Activated B cell treated with CpG ODN at 0.5 μM for 24 hours (primary cell): ENCODE measurements at regions of chr14 and their contacts with region 1.

Region 1: DNA sequence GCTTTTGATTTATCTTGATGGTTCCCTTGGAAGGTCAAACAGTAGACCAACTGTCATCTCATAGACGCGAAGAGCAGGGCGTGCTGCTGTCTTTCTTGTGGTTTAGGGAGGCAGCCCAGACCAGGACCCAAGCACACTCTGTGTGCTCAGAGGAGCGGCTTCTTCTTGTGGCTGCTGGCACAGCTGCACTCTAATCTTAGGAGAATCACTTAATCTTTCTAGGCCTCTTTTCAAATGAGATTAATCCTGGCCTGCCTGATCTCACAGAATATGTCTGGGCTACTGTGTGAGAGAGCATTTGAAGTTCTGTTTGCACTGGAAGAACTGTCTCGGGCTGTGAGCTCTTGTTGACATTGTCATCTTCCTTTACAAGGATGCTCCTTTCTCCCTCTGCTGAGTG is 60.0 kb upstream of the TRAF3 start:
- DNase-seq: no peak
- ATAC-seq: no peak
- H3K4me3 Mint-ChIP-seq: no peak overlapping the region
- H3K27ac Mint-ChIP-seq: no peak overlapping the region
- H3K4me1 Mint-ChIP-seq: no peaks in the 10 kb centered on the region
- H3K27me3 Mint-ChIP-seq: no peaks in the 10 kb centered on the region
- CTCF ChIP-seq: no peak

Region 2: GRCh38 chr14:102591889-102592763 is 125.2 kb before region 1 on chr14 and contains the start of gene RCOR1:
- CTCF ChIA-PET with region 1: no interaction called
- POLR2A ChIA-PET with region 1: no interaction called
- intact Hi-C with region 1: no loop called
- DNase-seq: peak; percentile 94
- ATAC-seq: peak; percentile 84
- H3K4me3 Mint-ChIP-seq: peak within 1 kb of the TSS; percentile 93
- H3K27ac Mint-ChIP-seq: peak within 1 kb of the TSS; percentile 97
- H3K4me1 Mint-ChIP-seq: peaks cover 26% of the 10 kb centered on the region
- H3K27me3 Mint-ChIP-seq: no peaks in the 10 kb centered on the region
- CTCF ChIP-seq: no peak
- total RNA-seq, gene RCOR1: 21.0 and 23.0 TPM in 2 replicates

Region 3: GRCh38 chr14:102831163-102831804 is 114.0 kb after region 1 on chr14:
- CTCF ChIA-PET with region 1: no interaction called
- POLR2A ChIA-PET with region 1: no interaction called
- intact Hi-C with region 1: loop called (anchors 5 kb)
- DNase-seq: no peak
- ATAC-seq: no peak
- H3K4me3 Mint-ChIP-seq: no peak overlapping the region
- H3K27ac Mint-ChIP-seq: no peak overlapping the region
- H3K4me1 Mint-ChIP-seq: peaks cover 43% of the 10 kb centered on the region
- H3K27me3 Mint-ChIP-seq: no peaks in the 10 kb centered on the region
- CTCF ChIP-seq: no peak